HEK293T (cell line): ENCODE measurements at regions of chr3 and their contacts with region 1.

Region 1: GRCh38 chr3:9749645-9750555 is at the start of gene OGG1:
- DNase-seq: peak; percentile 96

Region 2: DNA sequence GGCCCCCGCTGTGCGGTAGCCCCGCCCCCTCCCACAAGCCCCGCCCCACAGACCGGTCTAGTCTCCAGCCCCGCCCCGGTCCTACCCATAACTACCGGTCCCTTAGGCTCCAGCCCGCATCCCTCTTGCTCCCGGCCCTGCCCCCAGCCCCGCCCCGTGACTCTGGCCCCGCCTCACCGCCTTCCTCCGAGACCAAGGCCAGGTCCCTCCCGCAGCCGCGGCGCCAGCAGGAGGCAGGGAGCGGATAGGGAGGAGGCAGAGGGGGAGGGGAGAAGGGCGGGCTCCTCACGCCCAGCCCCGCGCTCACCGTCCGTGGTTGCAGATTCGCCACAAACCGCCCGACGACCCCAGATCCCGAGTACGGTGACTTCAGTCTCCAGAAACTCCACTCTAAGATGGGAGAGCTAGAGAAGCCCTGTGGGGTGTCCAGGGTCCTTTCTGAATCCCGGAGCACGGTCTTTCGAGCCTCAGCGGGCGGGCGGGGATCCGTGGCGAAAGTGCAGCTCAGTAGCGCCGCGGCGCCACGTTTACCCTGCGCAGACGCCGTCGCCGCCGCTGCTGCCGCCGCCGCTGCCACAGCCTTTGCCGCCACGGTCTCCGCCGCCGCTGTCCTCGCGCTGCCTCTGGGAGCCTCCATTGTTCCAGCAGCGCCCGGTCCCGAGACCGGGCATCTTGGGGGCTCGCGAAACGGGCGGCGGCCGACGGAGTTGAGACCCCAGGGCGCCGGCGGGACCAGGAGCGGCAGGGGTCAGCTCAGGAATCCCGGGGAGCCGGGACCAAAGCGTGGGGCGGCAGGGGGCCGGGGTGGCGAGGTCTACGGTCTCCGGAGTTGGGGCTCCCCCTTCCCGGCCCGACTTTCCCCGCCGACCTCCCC is 18.5 kb before region 1 on chr3 and contains the start of gene BRPF1:
- CTCF ChIA-PET with region 1: interaction called, 3 read pairs
- POLR2A ChIA-PET with region 1: interaction called, 35 read pairs
- DNase-seq: peak; percentile 100

Region 3: DNA sequence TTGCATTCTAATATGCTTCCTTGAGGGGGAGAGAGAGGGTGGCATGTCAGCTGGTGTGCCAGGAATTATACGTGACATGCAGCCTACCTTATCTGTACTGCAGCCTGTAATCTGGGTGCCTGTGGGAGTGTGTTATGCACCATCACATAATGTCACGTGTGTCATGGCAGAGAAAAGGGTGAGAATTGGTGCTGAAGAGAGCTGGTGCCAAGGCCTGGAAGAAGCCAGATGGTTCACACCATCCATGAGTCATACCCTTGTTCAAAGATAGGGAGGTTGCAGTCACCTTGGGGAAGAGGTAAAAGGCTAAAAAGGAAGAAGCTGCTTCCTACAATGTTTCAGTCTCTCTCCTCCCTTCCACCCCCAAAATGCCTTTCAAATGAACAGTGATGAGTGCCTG is 13.1 kb before region 1 on chr3:
- CTCF ChIA-PET with region 1: interaction called, 3 read pairs
- POLR2A ChIA-PET with region 1: interaction called, 35 read pairs
- DNase-seq: no peak

Region 4: GRCh38 chr3:9792405-9793160 is 42.7 kb after region 1 on chr3 and contains the starts of genes ARPC4 and TADA3:
- CTCF ChIA-PET with region 1: no interaction called
- POLR2A ChIA-PET with region 1: interaction called, 13 read pairs
- DNase-seq: peak; percentile 96

Region 5: GRCh38 chr3:9862391-9863057 is 112.6 kb after region 1 on chr3:
- CTCF ChIA-PET with region 1: no interaction called
- POLR2A ChIA-PET with region 1: no interaction called
- DNase-seq: no peak